ENCODE measurements at regions of chr15 and their contacts with region 1.

Region 1: GRCh38 chr15:52227456-52227855 is 36.3 kb upstream of the GNB5 start:
- DNase-seq: peak; percentile 40
- ATAC-seq: peak; percentile 78
- H3K4me3 Mint-ChIP-seq: no peak overlapping the region
- H3K27ac Mint-ChIP-seq: peak overlapping the region; percentile 93
- H3K4me1 Mint-ChIP-seq: peaks cover 84% of the 10 kb centered on the region
- H3K27me3 Mint-ChIP-seq: no peaks in the 10 kb centered on the region
- CTCF ChIP-seq: no peak

Region 2: DNA sequence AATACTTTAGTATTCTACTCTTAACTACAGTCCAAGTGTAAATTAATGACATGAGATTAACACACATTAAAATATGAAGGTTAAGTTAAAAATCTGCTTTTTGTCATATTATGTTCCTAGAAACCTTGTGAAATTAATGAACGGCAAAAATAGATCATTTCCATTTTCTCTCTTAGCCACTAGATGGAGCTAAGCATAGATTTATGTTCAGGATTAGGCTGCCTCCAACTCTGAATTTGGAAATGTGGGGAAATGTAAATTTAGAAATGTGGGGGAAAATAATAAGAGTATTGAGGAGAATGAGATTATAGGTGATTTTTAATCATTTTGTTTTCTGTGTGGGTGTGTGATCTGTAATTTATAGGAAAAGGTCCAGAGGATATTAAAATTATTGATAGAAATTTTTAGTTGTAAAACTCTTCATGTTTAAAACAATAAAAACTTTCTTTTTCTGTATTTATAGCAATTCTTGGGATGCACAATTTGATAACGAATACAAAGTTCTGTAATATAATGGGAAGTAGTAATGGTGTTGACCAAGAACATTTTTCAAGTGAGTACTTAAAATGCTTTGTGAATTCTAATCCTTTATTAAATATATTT is 338.8 kb before region 1 on chr15:
- CTCF ChIA-PET with region 1: no interaction called
- POLR2A ChIA-PET with region 1: no interaction called
- intact Hi-C with region 1: loop called (anchors 1 kb)
- DNase-seq: no peak
- ATAC-seq: no peak
- H3K4me3 Mint-ChIP-seq: no peak overlapping the region
- H3K27ac Mint-ChIP-seq: no peak overlapping the region
- H3K4me1 Mint-ChIP-seq: peaks cover 4% of the 10 kb centered on the region
- H3K27me3 Mint-ChIP-seq: no peaks in the 10 kb centered on the region
- CTCF ChIP-seq: peak; percentile 58

Region 3: GRCh38 chr15:52078876-52079700 is 148.4 kb before region 1 on chr15:
- CTCF ChIA-PET with region 1: interaction called, 10 read pairs
- POLR2A ChIA-PET with region 1: no interaction called
- intact Hi-C with region 1: loop called (anchors 1 kb)
- DNase-seq: peak; percentile 60
- ATAC-seq: peak; percentile 68
- H3K4me3 Mint-ChIP-seq: no peak overlapping the region
- H3K27ac Mint-ChIP-seq: no peak overlapping the region
- H3K4me1 Mint-ChIP-seq: peaks cover 23% of the 10 kb centered on the region
- H3K27me3 Mint-ChIP-seq: no peaks in the 10 kb centered on the region
- CTCF ChIP-seq: peak; percentile 76

Region 4: DNA sequence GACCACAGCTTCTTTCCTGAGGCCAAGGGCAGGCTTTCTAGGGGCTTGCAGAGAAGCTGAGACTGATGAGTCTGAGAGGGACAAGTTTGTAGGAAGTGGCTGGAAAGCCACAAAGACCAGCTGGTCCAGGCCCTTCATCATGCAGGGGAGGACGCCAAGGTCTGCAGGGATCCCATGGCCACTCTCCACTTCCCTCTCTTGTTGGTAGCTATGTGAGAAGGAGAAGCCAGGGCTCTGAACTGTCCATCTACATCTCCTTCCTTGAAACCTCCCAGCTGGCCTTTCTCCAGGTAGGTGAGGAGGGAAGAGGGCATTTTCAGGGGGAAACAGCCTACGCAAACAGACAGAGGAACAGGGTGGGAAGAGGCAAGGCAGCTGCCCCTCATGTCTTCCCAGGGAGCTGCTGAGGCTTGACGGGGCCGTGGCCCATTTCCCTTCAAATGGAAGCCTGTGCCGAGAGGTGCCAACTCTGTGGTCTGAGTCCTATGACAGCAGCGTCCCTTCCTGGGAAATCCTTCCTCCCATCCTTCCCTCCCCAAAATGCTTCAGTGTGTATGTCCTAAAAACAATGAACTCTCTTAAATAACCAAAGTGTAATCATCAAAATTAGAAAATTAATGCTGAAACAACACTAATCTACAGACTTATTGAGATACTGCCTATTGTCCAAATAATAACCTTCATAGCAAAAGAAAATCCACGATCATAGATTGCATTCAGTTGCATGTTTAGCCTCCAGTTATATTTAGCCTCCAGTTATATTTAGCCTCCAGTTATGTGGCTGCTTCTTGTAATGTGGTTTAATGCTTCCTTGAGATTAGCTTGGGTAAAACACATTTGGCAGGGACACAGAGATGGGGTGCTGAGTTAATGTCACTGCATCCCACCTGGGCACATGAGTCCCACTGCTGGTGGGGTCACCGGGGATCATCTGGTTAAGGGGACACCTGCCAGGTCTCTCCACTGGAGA is 72.3 kb before region 1 on chr15:
- CTCF ChIA-PET with region 1: no interaction called
- POLR2A ChIA-PET with region 1: no interaction called
- intact Hi-C with region 1: no loop called
- DNase-seq: no peak
- ATAC-seq: no peak
- H3K4me3 Mint-ChIP-seq: no peak overlapping the region
- H3K27ac Mint-ChIP-seq: no peak overlapping the region
- H3K4me1 Mint-ChIP-seq: peaks cover 23% of the 10 kb centered on the region
- H3K27me3 Mint-ChIP-seq: no peaks in the 10 kb centered on the region
- CTCF ChIP-seq: no peak

Region 5: DNA sequence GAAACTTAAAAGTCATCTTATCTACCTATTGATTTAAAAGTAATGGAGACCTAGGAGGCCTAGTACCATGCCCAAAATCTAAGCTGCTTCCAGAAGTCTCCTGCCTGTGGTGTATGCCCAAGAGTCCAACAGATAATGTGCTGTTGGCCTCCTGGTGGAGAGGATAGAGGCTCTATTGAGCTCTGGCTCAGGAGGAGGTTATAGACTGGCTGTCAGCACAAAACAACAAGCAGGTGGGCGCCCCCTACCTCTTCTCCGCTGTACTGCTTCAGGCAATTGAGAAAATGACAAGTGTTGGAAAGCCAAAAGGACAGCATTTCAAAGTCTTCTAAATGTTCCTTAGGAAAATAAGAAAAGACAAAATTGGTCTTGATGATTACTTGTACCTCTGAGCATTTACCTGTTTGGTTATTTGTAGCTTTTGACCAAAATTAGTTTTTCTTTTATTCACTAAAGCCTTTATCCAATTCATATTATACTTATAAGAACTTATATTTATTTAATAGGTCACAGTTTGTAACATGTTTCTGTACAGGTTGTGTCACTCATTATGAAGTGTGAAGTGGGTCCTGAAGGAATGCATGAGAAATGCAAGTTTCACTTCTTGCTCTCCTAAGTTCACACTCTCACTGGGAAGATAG is 19.0 kb before region 1 on chr15:
- CTCF ChIA-PET with region 1: interaction called, 19 read pairs
- POLR2A ChIA-PET with region 1: interaction called, 3 read pairs
- intact Hi-C with region 1: loop called (anchors 2 kb)
- DNase-seq: peak; percentile 44
- ATAC-seq: peak; percentile 99
- H3K4me3 Mint-ChIP-seq: no peak overlapping the region
- H3K27ac Mint-ChIP-seq: no peak overlapping the region
- H3K4me1 Mint-ChIP-seq: no peaks in the 10 kb centered on the region
- H3K27me3 Mint-ChIP-seq: no peaks in the 10 kb centered on the region
- CTCF ChIP-seq: no peak

Region 6: DNA sequence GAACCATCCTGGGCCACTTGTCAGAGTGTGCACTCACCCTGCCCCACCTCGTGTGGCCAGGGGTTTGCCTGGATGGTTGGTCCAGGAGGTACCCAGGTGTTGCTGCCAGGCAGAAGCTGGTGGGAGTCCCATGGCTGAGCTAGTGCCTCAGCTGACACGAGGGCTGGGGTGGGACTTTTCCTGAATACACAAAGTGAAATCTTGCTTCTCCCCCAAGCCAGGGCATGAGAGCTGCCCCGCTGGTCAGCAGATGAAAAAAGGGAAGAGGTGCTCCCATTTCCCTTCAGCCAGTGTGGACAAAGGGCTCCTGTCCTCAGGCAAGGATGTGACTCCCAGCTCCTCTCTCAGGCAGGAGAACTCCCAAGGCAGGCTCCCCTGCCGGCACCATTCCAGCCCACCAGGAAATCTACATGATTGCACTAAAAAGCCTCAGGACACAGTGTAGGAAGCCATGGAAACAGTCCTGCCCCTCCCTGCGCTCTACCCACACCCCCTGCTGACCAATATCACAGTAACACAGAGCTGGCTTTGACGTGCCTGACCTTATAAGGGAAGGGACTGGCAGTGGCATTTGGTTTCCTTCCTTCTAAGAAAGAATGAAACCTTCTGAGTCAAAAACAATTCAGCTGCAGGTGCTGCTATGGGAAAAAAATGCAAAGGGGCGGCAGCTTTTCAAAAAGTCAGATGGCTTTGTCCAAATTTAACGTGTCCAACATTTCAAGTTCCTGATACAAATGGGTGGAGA is 34.2 kb after region 1 on chr15:
- CTCF ChIA-PET with region 1: interaction called, 66 read pairs
- POLR2A ChIA-PET with region 1: interaction called, 297 read pairs
- intact Hi-C with region 1: loop called (anchors 1 kb)
- DNase-seq: peak; percentile 36
- ATAC-seq: peak; percentile 100
- H3K4me3 Mint-ChIP-seq: peak overlapping the region; percentile 71
- H3K27ac Mint-ChIP-seq: peak overlapping the region; percentile 94
- H3K4me1 Mint-ChIP-seq: peaks cover 39% of the 10 kb centered on the region
- H3K27me3 Mint-ChIP-seq: no peaks in the 10 kb centered on the region
- CTCF ChIP-seq: no peak